ENCODE measurements at regions of chr11 and their contacts with region 1.

Region 1: DNA sequence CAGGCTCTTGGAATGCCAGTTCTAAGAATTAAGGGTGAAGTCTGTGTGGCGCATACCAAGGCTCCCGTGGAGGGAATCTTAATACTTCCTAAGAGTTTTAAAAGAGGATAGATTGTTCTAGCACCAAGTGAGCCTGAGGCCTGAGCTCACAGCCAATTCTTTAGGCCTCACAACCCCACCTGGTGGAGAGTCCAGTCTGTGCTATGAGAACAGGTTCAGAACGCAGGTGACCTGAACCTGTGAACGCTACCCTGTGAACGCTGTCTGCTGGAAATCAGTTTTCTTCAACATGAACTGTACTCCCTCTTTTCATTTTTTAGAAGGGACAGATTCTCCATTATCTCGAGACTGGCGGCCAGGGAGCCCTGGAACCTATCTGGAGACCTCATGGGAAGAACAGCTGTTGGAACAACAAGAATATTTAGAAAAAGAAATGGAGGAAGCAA is 43.2 kb upstream of the DLAT start:
- DNase-seq: no peak
- H3K4me3 ChIP-seq: no peak overlapping the region
- H3K27ac ChIP-seq: no peak overlapping the region
- H3K27me3 ChIP-seq: no peaks in the 10 kb centered on the region
- CTCF ChIP-seq: peak; percentile 65

Region 2: GRCh38 chr11:111926505-111927391 is 55.3 kb before region 1 on chr11:
- CTCF ChIA-PET with region 1: interaction called, 42 read pairs
- POLR2A ChIA-PET with region 1: interaction called, 3 read pairs
- DNase-seq: peak; percentile 95
- H3K4me3 ChIP-seq: peak overlapping the region; percentile 59
- H3K27ac ChIP-seq: peak overlapping the region; percentile 47
- H3K27me3 ChIP-seq: no peaks in the 10 kb centered on the region
- CTCF ChIP-seq: no peak

Region 3: GRCh38 chr11:111932611-111932950 is 49.5 kb before region 1 on chr11:
- CTCF ChIA-PET with region 1: interaction called, 42 read pairs
- POLR2A ChIA-PET with region 1: interaction called, 3 read pairs
- DNase-seq: no peak
- H3K4me3 ChIP-seq: no peak overlapping the region
- H3K27ac ChIP-seq: no peak overlapping the region
- H3K27me3 ChIP-seq: no peaks in the 10 kb centered on the region
- CTCF ChIP-seq: no peak

Region 4: GRCh38 chr11:111938687-111939160 is 43.3 kb before region 1 on chr11:
- CTCF ChIA-PET with region 1: interaction called, 15 read pairs
- POLR2A ChIA-PET with region 1: interaction called, 4 read pairs
- DNase-seq: no peak
- H3K4me3 ChIP-seq: peak overlapping the region; percentile 46
- H3K27ac ChIP-seq: peak overlapping the region; percentile 43
- H3K27me3 ChIP-seq: no peaks in the 10 kb centered on the region
- CTCF ChIP-seq: no peak

Measured in AG04450 (cell line).